HepG2 (cell line): ENCODE measurements at regions of chr10 and their contacts with region 1.

Region 1: GRCh38 chr10:110893559-110894179 is 21.9 kb downstream of the PDCD4 start:
- DNase-seq: peak; percentile 34
- ATAC-seq: peak; percentile 73
- H3K4me3 ChIP-seq: no peak overlapping the region
- H3K27ac ChIP-seq: no peak overlapping the region
- H3K4me1 ChIP-seq: peaks cover 12% of the 10 kb centered on the region
- H3K27me3 ChIP-seq: no peaks in the 10 kb centered on the region
- CTCF ChIP-seq: peak; percentile 65
- EP300 ChIP-seq: no peak
- POLR2A ChIP-seq: no peak
- RAD21 ChIP-seq: no peak

Region 2: DNA sequence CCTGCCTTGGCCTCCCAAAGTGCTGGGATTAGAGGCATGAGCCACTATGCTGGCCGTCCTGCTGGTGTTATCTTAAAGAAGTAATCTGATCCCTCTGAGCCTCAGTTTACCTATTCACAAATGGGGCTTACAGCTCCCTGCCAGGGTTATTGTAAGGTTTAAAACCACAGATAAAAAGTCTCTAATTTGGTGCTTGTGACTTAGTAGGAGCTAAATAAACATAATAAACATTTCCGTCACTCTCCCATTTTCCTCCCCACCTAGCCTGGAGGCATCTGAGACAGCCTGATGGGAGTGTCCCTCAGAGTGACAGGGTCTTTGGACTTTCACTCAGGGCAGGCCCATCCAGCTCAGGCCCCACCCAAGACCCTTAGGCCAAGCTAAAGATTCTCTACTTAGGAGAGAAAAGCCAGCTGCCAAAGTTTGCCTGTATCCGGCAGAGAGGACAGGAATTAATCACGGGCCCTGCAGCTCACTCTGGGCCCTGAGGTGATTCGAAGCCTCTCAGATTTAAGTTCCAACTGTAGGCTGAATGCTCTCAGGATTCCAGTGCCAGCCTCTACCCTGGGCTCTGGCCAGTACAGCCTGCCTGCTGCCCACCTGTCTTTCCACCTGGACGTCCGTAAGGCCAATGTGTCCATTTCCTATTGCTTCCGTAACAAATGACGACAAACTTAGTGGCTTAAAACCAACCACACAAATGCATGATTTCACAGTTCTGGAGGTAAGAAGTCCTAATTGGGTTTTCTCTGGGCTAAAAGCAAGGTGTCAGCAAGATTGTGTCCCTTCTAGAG is 417.8 kb before region 1 on chr10:
- CTCF ChIA-PET with region 1: no interaction called
- POLR2A ChIA-PET with region 1: no interaction called
- in situ Hi-C with region 1: no loop called
- intact Hi-C with region 1: loop called (anchors 5 kb)
- DNase-seq: no peak
- ATAC-seq: no peak
- H3K4me3 ChIP-seq: no peak overlapping the region
- H3K27ac ChIP-seq: no peak overlapping the region
- H3K4me1 ChIP-seq: no peaks in the 10 kb centered on the region
- H3K27me3 ChIP-seq: peaks cover 0 to 5% of the 10 kb centered on the region in 2 experiments; a peak in 1 of 5 replicates
- CTCF ChIP-seq: no peak
- EP300 ChIP-seq: no peak
- POLR2A ChIP-seq: no peak
- RAD21 ChIP-seq: no peak

Region 3: DNA sequence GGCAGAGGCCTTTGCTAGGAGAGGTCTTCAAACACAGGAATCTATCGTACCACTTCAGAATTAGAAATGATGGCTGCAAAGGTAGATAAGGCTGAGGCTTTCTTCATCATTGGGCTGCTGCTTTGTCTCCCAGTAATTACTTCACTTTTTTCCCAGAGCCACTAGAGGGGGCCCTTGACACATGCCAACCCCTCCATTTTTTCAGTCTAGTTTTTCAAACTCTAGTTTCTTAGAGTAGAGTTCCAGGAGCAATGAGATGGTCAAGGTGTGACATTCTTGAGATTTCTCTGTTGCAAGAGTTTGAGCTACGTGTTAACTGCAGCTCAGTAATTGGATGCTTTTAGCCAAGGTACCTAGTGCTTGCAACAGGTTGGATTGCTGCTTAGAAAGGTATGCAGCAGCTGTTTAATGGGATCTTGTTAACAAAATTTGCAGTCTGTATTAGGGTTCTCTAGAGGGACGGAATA is 283.3 kb before region 1 on chr10:
- CTCF ChIA-PET with region 1: interaction called, 3 read pairs
- POLR2A ChIA-PET with region 1: no interaction called
- in situ Hi-C with region 1: loop called (anchors 25 kb)
- intact Hi-C with region 1: no loop called
- DNase-seq: peak; percentile 44
- ATAC-seq: peak; percentile 79
- H3K4me3 ChIP-seq: no peak overlapping the region
- H3K27ac ChIP-seq: no peak overlapping the region
- H3K4me1 ChIP-seq: no peaks in the 10 kb centered on the region
- H3K27me3 ChIP-seq: no peaks in the 10 kb centered on the region; a peak in 1 of 5 replicates
- CTCF ChIP-seq: peak; percentile 79
- EP300 ChIP-seq: no peak
- POLR2A ChIP-seq: no peak
- RAD21 ChIP-seq: peak; percentile 72; the same call in 1 of the 2 replicates

Region 4: GRCh38 chr10:110746254-110746826 is 147.3 kb before region 1 on chr10:
- CTCF ChIA-PET with region 1: interaction called, 25 read pairs
- POLR2A ChIA-PET with region 1: no interaction called
- in situ Hi-C with region 1: loop called (anchors 5 kb)
- intact Hi-C with region 1: loop called (anchors 1 kb)
- DNase-seq: peak; percentile 56
- ATAC-seq: peak; percentile 90
- H3K4me3 ChIP-seq: no peak overlapping the region
- H3K27ac ChIP-seq: no peak overlapping the region
- H3K4me1 ChIP-seq: peaks cover 14% of the 10 kb centered on the region
- H3K27me3 ChIP-seq: 0 out of 5 replicates have a peak, but pooled peaks cover 0 to 3% of the 10 kb centered on the region in 2 experiments
- CTCF ChIP-seq: peak; percentile 85
- EP300 ChIP-seq: no peak
- POLR2A ChIP-seq: no peak
- RAD21 ChIP-seq: peak; percentile 86

Region 5: DNA sequence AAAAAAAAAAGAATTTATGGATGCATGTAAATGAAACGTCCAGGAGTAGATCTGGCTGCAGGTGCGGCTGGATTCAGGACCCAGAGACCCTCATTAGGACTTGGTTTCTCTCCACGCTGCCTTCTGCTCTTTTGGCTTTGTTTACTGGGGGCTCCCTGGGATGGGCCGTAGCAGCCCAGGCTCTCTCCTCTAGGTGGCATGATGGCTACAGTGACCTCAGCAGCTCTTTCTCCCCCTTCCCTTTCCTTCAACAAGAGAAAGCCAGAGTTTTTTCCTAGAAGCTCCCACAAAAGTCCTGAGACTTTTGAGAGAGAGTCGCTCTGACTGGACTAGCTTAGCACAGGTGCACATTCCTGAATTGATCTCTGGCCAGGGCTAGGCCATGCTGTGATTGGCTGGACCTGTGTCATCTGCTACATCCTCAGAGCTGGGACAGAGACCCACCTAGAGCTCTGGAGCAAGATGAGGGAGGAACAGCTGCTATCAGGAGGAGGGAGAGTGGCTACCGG is 89.8 kb before region 1 on chr10:
- CTCF ChIA-PET with region 1: interaction called, 19 read pairs
- POLR2A ChIA-PET with region 1: interaction called, 3 read pairs
- in situ Hi-C with region 1: no loop called
- intact Hi-C with region 1: loop called (anchors 1 kb)
- DNase-seq: peak; percentile 45
- ATAC-seq: peak; percentile 95
- H3K4me3 ChIP-seq: peak overlapping the region in 1 of 3 experiments; percentile 12; a peak in 1 of 6 replicates
- H3K27ac ChIP-seq: no peak overlapping the region
- H3K4me1 ChIP-seq: peaks cover 22% of the 10 kb centered on the region
- H3K27me3 ChIP-seq: peaks cover 0 to 3% of the 10 kb centered on the region in 2 experiments; a peak in 1 of 5 replicates
- CTCF ChIP-seq: peak; percentile 87
- EP300 ChIP-seq: no peak
- POLR2A ChIP-seq: no peak
- RAD21 ChIP-seq: peak; percentile 83

Region 6: DNA sequence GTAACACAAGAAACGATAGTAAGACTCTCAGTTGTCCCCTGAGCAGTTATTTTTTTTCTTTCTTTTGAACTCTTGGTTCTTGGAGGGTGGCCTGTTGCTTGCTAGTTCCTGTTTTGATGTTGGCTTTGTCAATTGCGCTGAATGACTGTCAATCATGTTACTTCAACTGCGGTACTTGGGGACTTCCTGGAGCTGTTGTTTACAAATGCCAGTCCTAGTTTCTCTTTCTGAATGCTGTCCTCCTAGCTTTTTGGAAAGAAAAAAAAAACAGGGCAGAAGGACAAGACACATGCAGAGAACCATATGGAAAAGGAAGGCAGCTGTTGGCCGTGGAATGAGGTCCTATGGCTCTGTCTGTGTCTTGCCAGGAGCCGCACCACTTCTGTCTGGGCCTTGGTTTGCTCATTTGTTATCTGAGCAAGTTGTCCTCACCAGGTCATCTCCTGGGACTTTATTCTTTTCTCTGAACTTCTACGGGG is 29.0 kb before region 1 on chr10:
- CTCF ChIA-PET with region 1: no interaction called
- POLR2A ChIA-PET with region 1: no interaction called
- in situ Hi-C with region 1: no loop called
- intact Hi-C with region 1: no loop called
- DNase-seq: no peak
- ATAC-seq: 0 out of 3 replicates have a peak, but pooled peaks have one; percentile 21
- H3K4me3 ChIP-seq: peak overlapping the region; percentile 44 to 55 (median 54)
- H3K27ac ChIP-seq: no peak overlapping the region
- H3K4me1 ChIP-seq: peaks cover 60% of the 10 kb centered on the region
- H3K27me3 ChIP-seq: no peaks in the 10 kb centered on the region
- CTCF ChIP-seq: no peak
- EP300 ChIP-seq: no peak
- POLR2A ChIP-seq: no peak
- RAD21 ChIP-seq: no peak

Region 7: DNA sequence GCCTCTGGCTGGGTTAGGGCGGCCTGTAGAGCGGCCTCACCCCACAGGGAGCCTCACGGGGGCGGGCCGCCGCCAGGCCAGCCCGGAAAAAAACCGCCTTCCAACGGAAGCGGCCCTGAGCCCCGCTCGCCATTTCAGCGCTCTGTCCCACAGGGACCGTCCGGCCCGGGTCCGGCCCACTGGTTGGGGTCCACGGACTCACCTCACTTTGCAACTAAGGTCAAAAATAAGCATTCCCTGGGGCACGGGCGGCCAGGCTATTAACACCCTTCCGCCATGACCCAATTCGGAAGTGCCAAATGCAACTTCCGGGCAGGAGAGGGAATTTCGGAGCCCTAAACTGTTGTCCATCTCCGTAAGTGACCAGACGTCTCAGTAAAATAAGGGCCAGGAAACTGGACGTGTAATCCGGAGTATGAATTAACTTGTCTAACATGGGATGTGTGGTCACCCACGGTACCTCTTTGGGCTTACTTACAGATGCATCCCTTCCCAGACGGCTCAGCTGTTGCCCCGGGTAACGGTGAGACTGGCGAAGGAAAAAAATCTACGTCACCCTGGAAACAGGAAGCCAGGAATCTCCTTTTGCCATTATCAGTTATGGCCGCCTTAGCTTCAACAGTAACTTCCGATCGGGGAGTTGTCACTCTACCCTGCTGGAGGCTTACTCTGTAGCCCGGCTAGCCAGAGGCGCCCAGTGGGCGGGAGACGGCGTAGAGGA is 25.1 kb after region 1 on chr10 and contains the start of gene BBIP1:
- CTCF ChIA-PET with region 1: no interaction called
- POLR2A ChIA-PET with region 1: interaction called, 10 read pairs
- in situ Hi-C with region 1: no loop called
- intact Hi-C with region 1: no loop called
- DNase-seq: peak; percentile 99
- ATAC-seq: peak; percentile 96
- H3K4me3 ChIP-seq: peak within 1 kb of the TSS; percentile 83 to 93 (median 89)
- H3K27ac ChIP-seq: peak within 1 kb of the TSS; percentile 97
- H3K4me1 ChIP-seq: peaks cover 43% of the 10 kb centered on the region
- H3K27me3 ChIP-seq: no peaks in the 10 kb centered on the region; a peak in 1 of 5 replicates
- CTCF ChIP-seq: peak; percentile 40
- EP300 ChIP-seq: 0 out of 4 replicates have a peak, but pooled peaks of 1 of the 2 experiments have one; percentile 28
- POLR2A ChIP-seq: peak; percentile 58 to 77; a peak in 3 of 4 replicates
- RAD21 ChIP-seq: peak; percentile 59
- total RNA-seq, gene BBIP1: 24.1 and 28.9 TPM in 2 replicates